Right lobe of liver (tissue), 6 donors: ENCODE measurements at regions of chr2 and their contacts with region 1.

Region 1: GRCh38 chr2:30721668-30722647 is 85.3 kb downstream of the CAPN13 start:
- DNase-seq: peak in 1 of 3 donors; percentile 51
- ATAC-seq: peak; percentile 87 to 94 (median 90)
- H3K4me3 ChIP-seq: no peak overlapping the region
- H3K27ac ChIP-seq: no peak overlapping the region
- H3K4me1 ChIP-seq: peaks cover 0 to 13% (median 0%) of the 10 kb centered on the region in 4 donors
- H3K27me3 ChIP-seq: no peaks in the 10 kb centered on the region
- CTCF ChIP-seq: no peak
- POLR2A ChIP-seq: no peak

Region 2: DNA sequence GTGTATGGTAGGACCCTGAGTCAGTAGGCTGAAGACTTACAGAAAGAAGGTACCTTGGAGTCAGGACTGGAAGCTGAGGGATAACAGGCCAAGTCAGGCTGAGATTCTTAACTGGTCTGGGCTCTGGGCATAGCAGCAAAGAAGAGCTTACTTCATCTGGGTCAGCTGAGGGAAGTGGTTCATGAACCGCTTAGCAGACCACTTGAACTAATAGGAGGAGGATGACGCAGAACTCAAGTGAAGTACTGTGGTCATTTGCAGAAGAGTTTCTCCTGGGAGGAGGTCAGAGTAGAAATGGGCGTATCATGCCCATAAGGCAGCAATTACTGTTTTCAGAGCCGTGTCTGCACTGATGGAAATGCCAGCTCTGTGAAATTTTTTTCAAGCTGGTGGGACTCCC is 110.4 kb before region 1 on chr2:
- intact Hi-C with region 1: no loop called
- DNase-seq: no peak
- ATAC-seq: no peak
- H3K4me3 ChIP-seq: no peak overlapping the region
- H3K27ac ChIP-seq: no peak overlapping the region
- H3K4me1 ChIP-seq: no peaks in the 10 kb centered on the region
- H3K27me3 ChIP-seq: no peaks in the 10 kb centered on the region
- CTCF ChIP-seq: no peak
- POLR2A ChIP-seq: no peak

Region 3: DNA sequence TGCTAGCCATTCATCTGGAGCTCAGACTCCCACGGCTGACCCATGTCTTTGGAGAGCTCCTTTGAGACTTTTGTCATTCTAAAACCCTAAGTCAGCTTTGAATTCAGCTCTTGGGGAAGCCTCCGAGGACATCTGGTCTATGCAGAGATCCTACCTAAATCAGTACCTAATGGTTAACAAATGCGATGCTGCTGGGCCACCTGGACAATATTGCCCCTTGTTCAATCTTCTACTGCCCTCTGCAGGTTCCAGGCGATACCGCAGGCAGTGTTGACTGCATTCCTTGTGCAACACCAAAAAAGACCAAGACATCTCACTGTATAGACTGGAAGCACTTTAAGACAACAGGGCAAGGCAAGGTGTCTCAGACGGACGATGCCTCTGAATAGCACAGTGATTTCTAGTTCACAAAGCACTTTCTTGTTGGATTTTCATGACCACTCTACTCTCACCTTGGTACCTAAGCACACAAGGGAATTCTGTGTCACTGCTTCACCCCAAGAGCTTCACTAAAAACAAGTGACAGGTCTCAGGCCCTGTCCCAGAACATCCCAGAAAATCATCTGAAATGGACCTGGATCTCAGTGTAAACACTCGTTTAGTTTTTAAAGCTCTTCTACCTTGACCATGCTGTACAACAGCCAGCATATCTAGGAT is 611.7 kb after region 1 on chr2:
- intact Hi-C with region 1: loop called in 1 of 2 experiments (anchors 10 kb)
- DNase-seq: peak; percentile 73 to 79 (median 74)
- ATAC-seq: peak; percentile 86 to 92 (median 89)
- H3K4me3 ChIP-seq: no peak overlapping the region
- H3K27ac ChIP-seq: no peak overlapping the region
- H3K4me1 ChIP-seq: no peaks in the 10 kb centered on the region
- H3K27me3 ChIP-seq: no peaks in the 10 kb centered on the region
- CTCF ChIP-seq: peak; percentile 91 to 96 (median 93)
- POLR2A ChIP-seq: no peak